ENCODE measurements at regions of chr1 and their contacts with region 1.

Region 1: DNA sequence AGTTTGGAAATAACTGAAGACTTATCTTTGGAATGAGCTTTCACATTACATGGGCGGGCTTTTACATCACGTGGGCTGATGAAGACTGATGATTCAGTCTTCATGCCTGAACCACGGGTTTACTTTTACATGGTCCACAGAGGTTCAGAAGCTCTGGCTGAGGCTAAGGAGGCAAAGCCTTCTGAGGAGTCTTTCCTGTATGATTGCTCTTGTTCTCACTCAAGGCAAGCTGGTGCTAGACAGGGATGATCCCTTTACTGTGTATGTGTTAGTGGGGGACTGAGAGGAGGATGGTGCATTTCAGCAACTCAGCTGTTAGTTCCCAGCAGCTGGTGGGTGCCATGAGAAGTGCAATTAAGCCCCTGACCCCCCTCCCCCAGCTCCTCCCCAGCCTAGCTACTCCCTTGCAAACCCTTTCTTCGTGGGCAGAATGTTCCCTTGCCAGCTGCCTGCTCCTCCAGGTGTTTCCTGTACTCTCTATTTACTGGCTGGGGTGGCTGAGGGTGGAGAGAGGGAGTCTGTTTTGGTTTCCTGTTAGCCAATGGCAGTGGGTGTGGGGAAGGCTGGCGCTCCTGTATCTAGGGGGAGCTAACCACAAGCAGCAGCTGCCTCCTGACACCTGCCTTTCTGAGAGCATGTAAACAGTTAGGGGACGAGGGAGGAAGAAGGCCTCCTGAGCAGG is 15.4 kb downstream of the BTG2 start:
- DNase-seq: no peak

Region 2: DNA sequence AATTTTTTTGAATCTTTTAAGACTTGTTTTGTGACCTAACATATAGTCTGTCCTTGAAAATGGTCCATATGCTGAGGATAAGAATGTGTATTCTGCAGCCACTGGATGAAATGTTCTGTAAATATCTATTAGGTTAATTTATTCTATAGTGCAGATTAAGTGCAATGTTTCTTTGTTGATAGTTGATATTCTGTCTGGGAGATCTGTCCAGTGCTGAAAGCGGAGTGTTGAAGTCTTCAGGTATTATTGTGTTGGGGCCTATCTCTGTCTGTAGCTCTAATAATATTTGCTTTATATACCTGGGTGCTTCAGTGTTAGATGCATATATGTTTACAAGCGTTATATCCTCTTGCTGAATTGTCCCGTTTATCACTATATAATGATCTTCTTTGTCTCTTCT is 386.0 kb before region 1 on chr1:
- intact Hi-C with region 1: loop called in 1 of 2 experiments (anchors 5 kb)
- DNase-seq: no peak

Region 3: GRCh38 chr1:203906932-203907331 is 586.2 kb after region 1 on chr1:
- intact Hi-C with region 1: no loop called
- DNase-seq: no peak